ENCODE measurements at regions of chr12 and their contacts with region 1.

Region 1: DNA sequence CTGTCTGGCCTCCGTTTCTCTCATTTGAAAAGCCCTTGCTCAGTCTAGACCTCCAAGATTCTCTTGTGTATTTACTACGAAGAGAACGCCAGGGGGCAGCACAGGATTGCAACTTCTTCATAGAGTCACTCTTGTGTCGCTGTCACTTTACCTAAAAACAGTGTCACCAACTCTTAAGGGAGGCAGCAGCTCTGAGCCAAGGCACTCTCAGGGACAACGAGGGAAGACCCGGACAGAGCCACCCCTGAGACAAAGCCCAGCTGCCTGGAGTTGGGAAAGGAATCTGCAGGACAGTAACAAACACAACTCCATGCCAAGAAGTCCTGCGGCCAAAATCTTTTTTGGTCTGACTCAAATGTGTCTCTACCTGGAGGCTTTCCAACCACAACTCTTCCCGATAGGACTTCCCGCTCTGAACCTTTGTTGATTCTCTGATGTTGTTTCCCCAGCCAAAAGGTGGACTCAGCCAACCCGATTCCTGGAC is 9.6 kb upstream of the RPAP3 start:
- DNase-seq: peak; percentile 97
- H3K4me3 Mint-ChIP-seq: peak overlapping the region; percentile 63
- H3K27ac Mint-ChIP-seq: no peak overlapping the region
- H3K4me1 Mint-ChIP-seq: peaks cover 15% of the 10 kb centered on the region
- H3K27me3 Mint-ChIP-seq: no peaks in the 10 kb centered on the region
- CTCF ChIP-seq: peak; percentile 85

Region 2: GRCh38 chr12:47725893-47726292 is 10.5 kb after region 1 on chr12:
- CTCF ChIA-PET with region 1: interaction called, 35 read pairs
- POLR2A ChIA-PET with region 1: no interaction called
- intact Hi-C with region 1: no loop called
- DNase-seq: no peak
- H3K4me3 Mint-ChIP-seq: no peak overlapping the region
- H3K27ac Mint-ChIP-seq: no peak overlapping the region
- H3K4me1 Mint-ChIP-seq: peaks cover 17% of the 10 kb centered on the region
- H3K27me3 Mint-ChIP-seq: no peaks in the 10 kb centered on the region
- CTCF ChIP-seq: no peak

Region 3: GRCh38 chr12:47736877-47737676 is 21.6 kb after region 1 on chr12:
- CTCF ChIA-PET with region 1: interaction called, 69 read pairs
- POLR2A ChIA-PET with region 1: no interaction called
- intact Hi-C with region 1: loop called (anchors 1 kb)
- DNase-seq: peak; percentile 59
- H3K4me3 Mint-ChIP-seq: no peak overlapping the region
- H3K27ac Mint-ChIP-seq: no peak overlapping the region
- H3K4me1 Mint-ChIP-seq: peaks cover 14% of the 10 kb centered on the region
- H3K27me3 Mint-ChIP-seq: no peaks in the 10 kb centered on the region
- CTCF ChIP-seq: no peak

Measured in MCF 10A (cell line).